ENCODE measurements at regions of chr14 and their contacts with region 1.

Region 1: DNA sequence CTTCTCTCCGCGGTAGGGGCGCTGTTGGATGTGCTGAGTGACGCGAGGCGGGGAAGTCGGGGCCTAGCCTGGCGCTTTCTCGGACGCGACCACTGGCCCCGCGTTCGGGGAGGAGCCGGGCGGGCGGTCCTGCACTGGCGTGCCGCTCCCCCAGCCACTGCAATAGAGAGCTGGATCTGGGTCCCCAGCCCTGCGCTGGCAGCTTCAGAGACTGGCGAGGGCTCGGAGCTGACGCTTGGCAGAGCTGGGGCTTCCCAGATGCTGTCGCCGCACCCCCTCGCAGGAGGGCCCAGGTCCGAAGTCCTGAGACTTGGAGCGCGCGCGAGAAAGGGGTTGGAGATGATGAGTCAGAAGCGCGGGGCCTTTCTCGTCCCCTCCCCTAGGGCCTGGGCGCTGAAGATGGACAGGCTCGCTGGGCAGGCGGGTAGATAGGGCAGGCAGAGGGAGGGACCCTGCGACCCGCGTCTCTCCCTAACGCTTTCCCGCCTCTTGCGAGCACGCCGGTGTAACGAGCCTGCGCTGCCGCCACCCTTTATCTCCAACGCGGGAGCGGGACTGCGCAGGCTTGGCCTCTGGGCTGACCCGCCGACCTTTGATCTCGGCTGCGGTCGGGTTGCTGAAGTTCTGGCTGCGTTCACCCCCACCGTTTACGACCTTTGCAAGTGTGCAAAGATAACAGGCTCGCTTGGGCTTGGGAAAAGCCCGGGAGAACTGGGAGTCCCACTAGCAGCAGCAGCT is 3.0 kb downstream of the TMEM253 start:
- DNase-seq: peak; percentile 94
- H3K4me3 ChIP-seq: peak overlapping the region in 2 of 3 experiments; percentile 47 to 60
- H3K27ac ChIP-seq: peak overlapping the region; percentile 93
- H3K4me1 ChIP-seq: peaks cover 20% of the 10 kb centered on the region
- H3K27me3 ChIP-seq: peaks cover 12 to 18% of the 10 kb centered on the region in 2 experiments
- CTCF ChIP-seq: peak; percentile 82 to 85
- POLR2A ChIP-seq: peak; percentile 77

Region 2: DNA sequence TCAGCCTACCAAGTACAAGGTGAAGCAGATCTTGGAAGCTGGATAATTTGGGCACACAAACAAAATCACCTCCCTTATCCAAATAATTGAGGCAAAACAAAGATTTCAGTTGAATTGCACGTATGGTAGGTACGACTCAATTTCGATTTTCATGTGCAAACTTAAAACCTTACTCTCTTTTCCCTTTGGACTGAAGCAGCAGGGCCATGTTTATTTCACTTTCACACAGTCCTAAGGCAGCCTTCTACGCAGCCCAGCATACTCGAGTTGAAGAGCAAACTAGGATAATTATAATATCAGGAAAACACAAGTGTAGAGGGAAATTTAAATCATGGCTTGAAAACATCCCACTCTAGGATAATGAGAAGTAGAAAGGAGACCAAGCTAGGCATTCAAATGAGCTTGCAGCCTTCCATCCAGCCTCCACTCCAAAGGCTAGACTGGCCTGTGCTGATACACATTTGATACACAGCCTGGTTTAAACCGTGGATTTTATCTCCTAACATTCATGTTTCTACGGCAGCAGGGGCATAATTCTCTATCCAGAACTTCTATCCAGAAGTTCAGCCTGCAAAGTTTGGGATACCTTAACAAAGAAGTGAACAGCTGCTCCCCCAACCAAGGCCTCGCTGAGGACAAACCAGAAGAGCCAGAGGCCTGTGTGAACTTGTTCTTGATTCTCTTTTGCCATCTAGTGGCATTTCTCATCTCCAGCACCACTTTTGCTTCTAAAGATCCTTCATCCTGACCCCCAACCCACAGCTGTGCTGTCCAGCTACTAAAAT is 64.1 kb before region 1 on chr14:
- CTCF ChIA-PET with region 1: interaction called, 14 read pairs
- POLR2A ChIA-PET with region 1: no interaction called
- dilution Hi-C with region 1: no loop called
- intact Hi-C with region 1: no loop called
- DNase-seq: peak; percentile 46
- H3K4me3 ChIP-seq: no peak overlapping the region
- H3K27ac ChIP-seq: no peak overlapping the region
- H3K4me1 ChIP-seq: peaks cover 4% of the 10 kb centered on the region
- H3K27me3 ChIP-seq: peaks cover 10 to 15% of the 10 kb centered on the region in 2 experiments
- CTCF ChIP-seq: peak; percentile 41 to 59
- POLR2A ChIP-seq: no peak

Region 3: DNA sequence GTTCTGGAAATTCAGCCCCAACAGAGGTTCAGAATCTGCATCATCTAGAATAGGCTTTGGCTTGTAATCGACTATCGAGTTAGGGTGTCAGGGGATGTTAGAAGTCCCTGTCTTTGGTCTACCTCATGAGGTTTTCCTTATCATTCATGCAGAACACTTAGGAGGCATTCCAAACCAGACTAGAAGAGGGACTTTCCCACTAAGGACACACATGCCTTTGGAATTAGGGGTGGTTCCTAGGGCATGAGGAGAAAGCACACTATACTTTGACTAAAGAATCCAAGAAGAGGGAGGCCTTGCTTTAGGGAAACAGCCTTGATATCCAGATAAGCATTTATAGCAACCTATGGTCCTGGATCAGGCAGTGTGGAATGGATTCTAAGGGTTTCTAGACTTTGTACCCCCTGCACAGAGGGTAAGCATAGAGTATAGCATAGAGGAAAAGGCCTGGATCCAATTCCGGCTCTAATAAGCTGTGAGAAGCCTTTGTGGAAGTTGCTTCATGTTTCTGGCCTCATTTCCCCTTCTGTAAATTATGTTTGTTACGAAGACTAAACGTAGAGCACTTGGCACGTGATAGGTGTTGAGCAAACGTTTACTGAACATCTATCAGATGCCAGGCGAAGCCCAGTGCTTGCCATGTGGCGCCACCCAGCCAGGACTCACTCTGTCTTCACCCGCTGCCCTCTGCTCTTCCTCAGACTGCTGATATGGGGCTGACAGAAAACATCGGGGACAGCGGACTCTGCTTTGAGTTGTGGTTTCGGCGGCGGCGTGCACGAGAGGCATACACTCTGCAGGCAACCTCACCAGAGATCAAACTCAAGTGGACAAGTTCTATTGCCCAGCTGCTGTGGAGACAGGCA is 18.7 kb before region 1 on chr14:
- CTCF ChIA-PET with region 1: interaction called, 53 read pairs
- POLR2A ChIA-PET with region 1: interaction called, 4 read pairs
- dilution Hi-C with region 1: no loop called
- intact Hi-C with region 1: no loop called
- DNase-seq: no peak
- H3K4me3 ChIP-seq: no peak overlapping the region
- H3K27ac ChIP-seq: no peak overlapping the region
- H3K4me1 ChIP-seq: no peaks in the 10 kb centered on the region
- H3K27me3 ChIP-seq: no peaks in the 10 kb centered on the region
- CTCF ChIP-seq: no peak
- POLR2A ChIP-seq: no peak

Region 4: GRCh38 chr14:21092273-21093011 is 11.4 kb before region 1 on chr14:
- CTCF ChIA-PET with region 1: interaction called, 130 read pairs
- POLR2A ChIA-PET with region 1: interaction called, 4 read pairs
- dilution Hi-C with region 1: no loop called
- intact Hi-C with region 1: loop called (anchors 1 kb)
- DNase-seq: peak; percentile 68
- H3K4me3 ChIP-seq: no peak overlapping the region
- H3K27ac ChIP-seq: no peak overlapping the region
- H3K4me1 ChIP-seq: peaks cover 3% of the 10 kb centered on the region
- H3K27me3 ChIP-seq: peaks cover 0 to 4% of the 10 kb centered on the region in 2 experiments
- CTCF ChIP-seq: peak; percentile 100
- POLR2A ChIP-seq: no peak

Region 5: GRCh38 chr14:21525962-21526671 is 422.2 kb after region 1 on chr14 and contains the start of gene SALL2:
- CTCF ChIA-PET with region 1: no interaction called
- POLR2A ChIA-PET with region 1: no interaction called
- dilution Hi-C with region 1: no loop called
- intact Hi-C with region 1: no loop called
- DNase-seq: peak; percentile 63
- H3K4me3 ChIP-seq: peak within 1 kb of the TSS; percentile 32 to 80 (median 67)
- H3K27ac ChIP-seq: no peak within 1 kb of the TSS
- H3K4me1 ChIP-seq: peaks cover 3% of the 10 kb centered on the region
- H3K27me3 ChIP-seq: peaks cover 20 to 21% of the 10 kb centered on the region in 2 experiments
- CTCF ChIP-seq: no peak
- POLR2A ChIP-seq: no peak
- total RNA-seq, gene SALL2: 4.6 and 6.8 TPM in 2 replicates

Measured in endothelial cell of umbilical vein (primary cell).